Activated T-helper 2 cell treated with anti-CD3 and anti-CD28 coated beads, Interferon-gamma antibody, Interleukin-2, Interleukin-4, amounts not matched to agents 10 μg/mL and 5 μg/mL and 100 μg/mL, durations not matched to agents 14 hours and 24 hours and 36 hours (primary cell): ENCODE measurements at regions of chr2 and their contacts with region 1.

Region 1: DNA sequence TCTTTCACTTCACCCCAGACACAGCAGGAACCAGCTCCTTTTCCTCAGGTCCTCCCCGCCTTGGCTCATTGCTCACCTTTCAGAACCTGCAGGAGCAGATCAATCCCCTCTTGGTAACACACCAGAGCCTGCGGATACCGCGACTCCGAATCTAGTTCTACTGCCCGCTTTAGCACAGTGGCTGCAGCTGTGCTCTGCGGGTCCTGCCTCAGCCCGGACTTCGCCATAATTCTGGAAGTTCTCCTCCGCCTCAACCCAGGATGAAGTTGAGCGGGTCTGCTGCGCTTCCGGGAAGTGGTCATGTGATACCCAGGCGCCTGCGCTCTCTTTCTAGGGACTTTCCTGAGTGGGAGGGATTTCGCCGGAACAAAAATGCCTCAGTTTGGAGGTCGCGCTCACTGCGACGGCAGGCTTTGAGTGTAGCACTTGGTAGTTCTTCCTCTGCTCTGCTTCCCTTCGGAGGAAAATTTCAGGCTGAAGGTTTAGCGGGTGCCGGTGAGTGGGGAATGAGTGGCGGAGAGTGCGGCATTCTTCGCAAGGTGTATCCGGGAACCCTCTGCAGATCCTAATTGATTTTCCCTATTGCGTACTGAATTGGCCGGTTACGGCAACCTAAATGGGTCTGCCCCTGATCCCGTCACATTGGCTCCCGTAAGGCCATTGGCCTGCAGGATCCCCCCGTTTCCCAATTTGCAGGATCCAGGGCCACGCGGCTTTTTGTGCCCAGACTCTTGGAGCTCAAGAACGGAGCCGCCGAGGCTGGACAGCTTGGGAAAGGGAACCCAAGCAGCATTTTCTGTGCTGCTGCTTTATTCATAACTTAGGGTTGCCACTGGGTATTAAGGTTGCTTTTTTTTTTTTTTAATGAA is at the starts of genes MITD1 and MRPL30:
- DNase-seq: peak; percentile 88
- H3K4me3 Mint-ChIP-seq: peak within 1 kb of the TSS; percentile 96
- H3K27ac Mint-ChIP-seq: peak within 1 kb of the TSS; percentile 91
- H3K4me1 Mint-ChIP-seq: peaks cover 34% of the 10 kb centered on the region
- H3K27me3 Mint-ChIP-seq: no peaks in the 10 kb centered on the region
- total RNA-seq, gene MITD1: 49.7 and 52.4 TPM in 2 replicates
- total RNA-seq, gene MRPL30: 27.6 and 29.4 TPM in 2 replicates

Region 2: GRCh38 chr2:99032786-99033185 is 148.2 kb before region 1 on chr2:
- intact Hi-C with region 1: no loop called
- DNase-seq: no peak
- H3K4me3 Mint-ChIP-seq: no peak overlapping the region
- H3K27ac Mint-ChIP-seq: no peak overlapping the region
- H3K4me1 Mint-ChIP-seq: peaks cover 13% of the 10 kb centered on the region
- H3K27me3 Mint-ChIP-seq: peaks cover 2% of the 10 kb centered on the region

Region 3: GRCh38 chr2:99085421-99085820 is 95.6 kb before region 1 on chr2:
- intact Hi-C with region 1: loop called (anchors 5 kb)
- DNase-seq: no peak
- H3K4me3 Mint-ChIP-seq: no peak overlapping the region
- H3K27ac Mint-ChIP-seq: no peak overlapping the region
- H3K4me1 Mint-ChIP-seq: peaks cover 4% of the 10 kb centered on the region
- H3K27me3 Mint-ChIP-seq: peaks cover 44% of the 10 kb centered on the region

Region 4: GRCh38 chr2:99141110-99142108 is 39.6 kb before region 1 on chr2 and contains the start of gene C2orf15:
- intact Hi-C with region 1: loop called (anchors 2 kb)
- DNase-seq: peak; percentile 91
- H3K4me3 Mint-ChIP-seq: peak within 1 kb of the TSS; percentile 83
- H3K27ac Mint-ChIP-seq: peak within 1 kb of the TSS; percentile 65
- H3K4me1 Mint-ChIP-seq: peaks cover 8% of the 10 kb centered on the region
- H3K27me3 Mint-ChIP-seq: peaks cover 24% of the 10 kb centered on the region
- total RNA-seq, gene C2orf15: 0.16 TPM in 1 of 2 replicates, not detected in the other

Region 5: DNA sequence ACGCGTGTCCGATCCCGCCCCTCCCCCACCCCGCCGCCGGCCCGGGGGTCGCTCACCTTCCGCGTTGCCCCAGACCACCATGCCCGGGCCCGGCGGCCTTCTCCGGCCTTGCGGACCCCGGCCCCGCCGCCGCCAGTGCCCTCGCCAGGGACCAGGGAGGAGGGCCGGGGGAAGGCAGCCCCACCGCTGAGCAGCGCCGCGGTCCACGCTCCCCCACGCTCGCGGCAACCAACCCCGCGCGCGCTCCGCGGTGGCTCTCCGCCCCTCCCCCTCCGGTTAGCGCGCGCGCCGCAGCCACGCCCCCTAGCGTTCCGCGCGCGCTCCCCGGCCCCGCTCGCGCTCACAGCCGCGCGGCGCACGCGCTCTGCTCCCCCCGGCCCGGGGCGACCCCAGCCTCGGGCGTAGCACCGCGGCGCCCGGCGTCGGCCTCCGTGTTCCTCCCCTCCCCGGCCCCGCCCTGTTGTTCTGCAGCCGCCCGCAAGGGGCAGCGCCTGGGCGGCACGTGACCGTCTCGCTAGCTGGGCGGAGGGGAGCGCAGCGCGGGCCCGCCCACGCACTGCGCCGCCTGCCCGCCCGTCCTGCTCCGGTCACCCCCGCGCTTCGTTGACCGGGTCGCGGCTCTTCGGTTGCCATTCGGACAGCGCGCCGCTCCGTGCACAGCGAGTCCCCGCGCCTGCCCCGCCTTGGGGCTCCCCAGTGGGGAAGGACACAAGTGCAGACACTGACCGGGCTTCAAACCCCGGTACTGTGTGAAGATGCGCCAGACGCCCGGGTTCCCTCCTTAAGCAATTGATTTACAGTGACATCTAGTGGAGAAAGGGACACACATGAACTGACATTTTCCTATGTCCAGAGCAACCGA is 309.0 kb after region 1 on chr2 and contains the start of gene REV1:
- intact Hi-C with region 1: loop called (anchors 1 kb)
- DNase-seq: peak; percentile 89
- H3K4me3 Mint-ChIP-seq: peak within 1 kb of the TSS; percentile 100
- H3K27ac Mint-ChIP-seq: peak within 1 kb of the TSS; percentile 97
- H3K4me1 Mint-ChIP-seq: peaks cover 31% of the 10 kb centered on the region
- H3K27me3 Mint-ChIP-seq: peaks cover 2% of the 10 kb centered on the region
- total RNA-seq, gene REV1: 39.4 and 41.3 TPM in 2 replicates